ENCODE measurements at regions of chr14 and their contacts with region 1.

Region 1: DNA sequence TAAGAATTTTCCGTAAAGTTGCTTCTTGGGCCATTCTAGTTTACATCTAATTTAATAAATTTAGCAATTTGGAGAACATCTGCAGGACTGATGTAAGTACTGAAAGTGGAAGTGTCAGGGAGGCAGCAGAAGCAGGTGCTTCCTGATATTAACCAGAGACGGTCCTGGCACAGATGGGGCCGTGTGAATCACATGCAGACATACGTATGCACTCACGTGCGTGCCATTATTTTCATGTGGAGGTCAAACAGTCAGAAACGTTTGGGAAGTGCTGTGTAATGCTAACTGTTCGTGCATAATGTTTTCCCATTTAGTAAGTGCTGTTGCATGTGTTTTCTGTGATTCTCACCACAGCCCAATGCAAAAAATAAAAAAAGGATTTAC is 87.8 kb upstream of the DYNC1H1 start:
- DNase-seq: peak; percentile 62
- H3K4me3 Mint-ChIP-seq: peak overlapping the region; percentile 54
- H3K27ac Mint-ChIP-seq: peak overlapping the region; percentile 70
- H3K4me1 Mint-ChIP-seq: peaks cover 73% of the 10 kb centered on the region
- H3K27me3 Mint-ChIP-seq: no peaks in the 10 kb centered on the region

Region 2: GRCh38 chr14:101604935-101605780 is 271.4 kb before region 1 on chr14:
- intact Hi-C with region 1: no loop called
- DNase-seq: no peak
- H3K4me3 Mint-ChIP-seq: no peak overlapping the region
- H3K27ac Mint-ChIP-seq: no peak overlapping the region
- H3K4me1 Mint-ChIP-seq: peaks cover 2% of the 10 kb centered on the region
- H3K27me3 Mint-ChIP-seq: peaks cover 27% of the 10 kb centered on the region

Region 3: GRCh38 chr14:101731187-101732080 is 145.1 kb before region 1 on chr14:
- intact Hi-C with region 1: loop called (anchors 5 kb)
- DNase-seq: peak; percentile 76
- H3K4me3 Mint-ChIP-seq: peak overlapping the region; percentile 70
- H3K27ac Mint-ChIP-seq: peak overlapping the region; percentile 93
- H3K4me1 Mint-ChIP-seq: peaks cover 56% of the 10 kb centered on the region
- H3K27me3 Mint-ChIP-seq: no peaks in the 10 kb centered on the region

Region 4: GRCh38 chr14:101774006-101774795 is 102.3 kb before region 1 on chr14:
- intact Hi-C with region 1: loop called (anchors 2 kb)
- DNase-seq: no peak
- H3K4me3 Mint-ChIP-seq: no peak overlapping the region
- H3K27ac Mint-ChIP-seq: no peak overlapping the region
- H3K4me1 Mint-ChIP-seq: peaks cover 12% of the 10 kb centered on the region
- H3K27me3 Mint-ChIP-seq: peaks cover 2% of the 10 kb centered on the region

Region 5: DNA sequence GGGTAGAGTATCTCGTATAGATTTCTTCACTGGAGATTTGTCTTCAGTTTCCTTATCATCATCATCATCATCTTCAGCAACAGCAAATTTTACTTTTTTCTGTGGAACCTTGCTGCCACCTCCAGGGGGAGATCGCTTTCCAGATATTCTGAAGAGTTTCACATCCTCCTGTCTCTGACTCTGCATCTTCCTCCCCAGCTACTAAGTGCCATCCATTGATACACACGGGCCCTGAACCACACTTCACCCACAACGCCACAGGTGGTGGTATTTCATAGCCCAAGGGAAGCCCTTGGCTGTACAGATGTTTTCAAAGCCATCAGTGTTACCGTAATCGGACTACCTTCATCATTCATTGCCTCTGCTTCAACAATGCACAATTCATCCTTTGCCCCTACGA is 32.9 kb before region 1 on chr14:
- intact Hi-C with region 1: loop called (anchors 2 kb)
- DNase-seq: peak; percentile 53
- H3K4me3 Mint-ChIP-seq: no peak overlapping the region
- H3K27ac Mint-ChIP-seq: peak overlapping the region; percentile 60
- H3K4me1 Mint-ChIP-seq: peaks cover 74% of the 10 kb centered on the region
- H3K27me3 Mint-ChIP-seq: no peaks in the 10 kb centered on the region

Region 6: DNA sequence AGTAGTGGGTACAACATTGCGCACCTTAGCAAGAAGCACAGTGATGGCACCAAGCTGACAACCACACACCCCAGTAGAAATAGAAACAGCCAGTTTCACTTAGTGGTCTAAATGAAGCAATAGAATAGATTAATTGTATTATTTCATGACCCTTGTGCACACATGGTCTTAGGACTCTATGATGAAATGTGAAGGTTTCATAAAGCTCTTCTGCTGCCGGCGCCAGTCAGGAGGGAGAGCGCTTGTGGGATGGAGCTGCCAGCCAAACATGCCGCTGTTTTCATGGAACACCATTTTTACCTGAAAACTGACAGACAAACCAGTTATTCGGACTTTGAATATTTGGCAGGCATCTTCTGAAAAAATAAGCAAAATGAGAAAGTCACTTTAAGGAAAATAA is 15.1 kb before region 1 on chr14:
- intact Hi-C with region 1: loop called (anchors 2 kb)
- DNase-seq: no peak
- H3K4me3 Mint-ChIP-seq: no peak overlapping the region
- H3K27ac Mint-ChIP-seq: no peak overlapping the region
- H3K4me1 Mint-ChIP-seq: peaks cover 35% of the 10 kb centered on the region
- H3K27me3 Mint-ChIP-seq: no peaks in the 10 kb centered on the region

Region 7: GRCh38 chr14:102131746-102132145 is 255.2 kb after region 1 on chr14:
- intact Hi-C with region 1: no loop called
- DNase-seq: no peak
- H3K4me3 Mint-ChIP-seq: no peak overlapping the region
- H3K27ac Mint-ChIP-seq: no peak overlapping the region
- H3K4me1 Mint-ChIP-seq: no peaks in the 10 kb centered on the region
- H3K27me3 Mint-ChIP-seq: no peaks in the 10 kb centered on the region